HEK293 (cell line): ENCODE measurements at regions of chr12 and their contacts with region 1.

Region 1: GRCh38 chr12:101969-102878 is 35.7 kb downstream of the IQSEC3 start:
- H3K4me3 ChIP-seq: no peak overlapping the region
- H3K27ac ChIP-seq: no peak overlapping the region
- H3K4me1 ChIP-seq: peaks cover 7% of the 10 kb centered on the region; the same call in 1 of the 2 replicates
- CTCF ChIP-seq: no peak

Region 2: GRCh38 chr12:288687-289086 is 186.5 kb after region 1 on chr12:
- CTCF ChIA-PET with region 1: no interaction called
- POLR2A ChIA-PET with region 1: interaction called, 12 read pairs
- H3K4me3 ChIP-seq: no peak overlapping the region
- H3K27ac ChIP-seq: no peak overlapping the region
- H3K4me1 ChIP-seq: no peaks in the 10 kb centered on the region
- CTCF ChIP-seq: no peak